ENCODE measurements at regions of chr1 and their contacts with region 1.

Region 1: GRCh38 chr1:89632657-89633247 is at the start of gene LRRC8C:
- DNase-seq: peak; percentile 90
- H3K4me3 Mint-ChIP-seq: peak within 1 kb of the TSS; percentile 93
- H3K27ac Mint-ChIP-seq: peak within 1 kb of the TSS; percentile 95
- H3K4me1 Mint-ChIP-seq: peaks cover 68% of the 10 kb centered on the region
- H3K27me3 Mint-ChIP-seq: no peaks in the 10 kb centered on the region
- total RNA-seq, gene LRRC8C: 36.4 to 40.4 TPM

Region 2: GRCh38 chr1:89391686-89392085 is 241.1 kb before region 1 on chr1:
- CTCF ChIA-PET with region 1: no interaction called
- POLR2A ChIA-PET with region 1: no interaction called
- intact Hi-C with region 1: no loop called
- DNase-seq: no peak
- H3K4me3 Mint-ChIP-seq: no peak overlapping the region
- H3K27ac Mint-ChIP-seq: no peak overlapping the region
- H3K4me1 Mint-ChIP-seq: no peaks in the 10 kb centered on the region
- H3K27me3 Mint-ChIP-seq: no peaks in the 10 kb centered on the region

Region 3: GRCh38 chr1:89649783-89650182 is 17.0 kb after region 1 on chr1:
- CTCF ChIA-PET with region 1: interaction called, 4 read pairs
- POLR2A ChIA-PET with region 1: interaction called, 3 read pairs
- intact Hi-C with region 1: loop called (anchors 1 kb)
- DNase-seq: no peak
- H3K4me3 Mint-ChIP-seq: no peak overlapping the region
- H3K27ac Mint-ChIP-seq: peak overlapping the region; percentile 56
- H3K4me1 Mint-ChIP-seq: peaks cover 76% of the 10 kb centered on the region
- H3K27me3 Mint-ChIP-seq: no peaks in the 10 kb centered on the region

Region 4: GRCh38 chr1:89670163-89670562 is 37.4 kb after region 1 on chr1:
- CTCF ChIA-PET with region 1: interaction called, 7 read pairs
- POLR2A ChIA-PET with region 1: interaction called, 3 read pairs
- intact Hi-C with region 1: loop called (anchors 1 kb)
- DNase-seq: no peak
- H3K4me3 Mint-ChIP-seq: peak overlapping the region; percentile 53
- H3K27ac Mint-ChIP-seq: peak overlapping the region; percentile 66
- H3K4me1 Mint-ChIP-seq: peaks cover 93% of the 10 kb centered on the region
- H3K27me3 Mint-ChIP-seq: no peaks in the 10 kb centered on the region

Region 5: GRCh38 chr1:89780721-89781120 is 148.0 kb after region 1 on chr1:
- CTCF ChIA-PET with region 1: interaction called, 9 read pairs
- POLR2A ChIA-PET with region 1: interaction called, 11 read pairs
- intact Hi-C with region 1: no loop called
- DNase-seq: peak; percentile 58
- H3K4me3 Mint-ChIP-seq: peak overlapping the region; percentile 48
- H3K27ac Mint-ChIP-seq: peak overlapping the region; percentile 90
- H3K4me1 Mint-ChIP-seq: peaks cover 43% of the 10 kb centered on the region
- H3K27me3 Mint-ChIP-seq: no peaks in the 10 kb centered on the region

Measured in activated CD4-positive, alpha-beta memory T cell treated with anti-CD3 and anti-CD28 coated beads for 36 hours (primary cell).